Ovary (tissue), 10 donors: ENCODE measurements at regions of chr15 and their contacts with region 1.

Region 1: GRCh38 chr15:52221730-52222129 is 30.5 kb upstream of the GNB5 start:
- DNase-seq: no peak
- H3K4me3 ChIP-seq: no peak overlapping the region
- H3K27ac ChIP-seq: no peak overlapping the region
- H3K4me1 ChIP-seq: no peaks in the 10 kb centered on the region
- H3K27me3 ChIP-seq: no peaks in the 10 kb centered on the region
- CTCF ChIP-seq: no peak
- EP300 ChIP-seq: no peak
- POLR2A ChIP-seq: no peak

Region 2: DNA sequence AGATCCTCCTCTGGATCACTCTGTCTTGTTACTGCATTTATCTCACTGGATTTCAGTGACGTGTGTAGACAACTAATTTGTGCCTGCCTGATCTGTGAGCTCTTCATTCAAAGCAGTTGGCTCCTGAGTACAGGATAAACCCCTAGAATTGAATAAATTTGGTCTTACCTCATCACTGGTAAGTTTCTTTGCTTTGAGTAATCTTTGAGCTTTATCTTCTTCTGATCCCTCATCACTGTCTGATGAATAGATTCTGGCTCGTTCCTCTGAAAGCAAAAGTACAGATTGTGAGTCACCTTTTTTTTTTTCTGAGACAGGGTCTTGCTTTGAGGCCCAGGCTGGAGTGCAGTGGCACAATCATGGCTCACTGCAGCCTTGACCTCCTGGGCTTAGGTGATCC is 274.6 kb before region 1 on chr15:
- intact Hi-C with region 1: no loop called
- DNase-seq: no peak
- H3K4me3 ChIP-seq: no peak overlapping the region
- H3K27ac ChIP-seq: no peak overlapping the region
- H3K4me1 ChIP-seq: no peaks in the 10 kb centered on the region
- H3K27me3 ChIP-seq: no peaks in the 10 kb centered on the region
- CTCF ChIP-seq: no peak
- EP300 ChIP-seq: no peak
- POLR2A ChIP-seq: no peak

Region 3: DNA sequence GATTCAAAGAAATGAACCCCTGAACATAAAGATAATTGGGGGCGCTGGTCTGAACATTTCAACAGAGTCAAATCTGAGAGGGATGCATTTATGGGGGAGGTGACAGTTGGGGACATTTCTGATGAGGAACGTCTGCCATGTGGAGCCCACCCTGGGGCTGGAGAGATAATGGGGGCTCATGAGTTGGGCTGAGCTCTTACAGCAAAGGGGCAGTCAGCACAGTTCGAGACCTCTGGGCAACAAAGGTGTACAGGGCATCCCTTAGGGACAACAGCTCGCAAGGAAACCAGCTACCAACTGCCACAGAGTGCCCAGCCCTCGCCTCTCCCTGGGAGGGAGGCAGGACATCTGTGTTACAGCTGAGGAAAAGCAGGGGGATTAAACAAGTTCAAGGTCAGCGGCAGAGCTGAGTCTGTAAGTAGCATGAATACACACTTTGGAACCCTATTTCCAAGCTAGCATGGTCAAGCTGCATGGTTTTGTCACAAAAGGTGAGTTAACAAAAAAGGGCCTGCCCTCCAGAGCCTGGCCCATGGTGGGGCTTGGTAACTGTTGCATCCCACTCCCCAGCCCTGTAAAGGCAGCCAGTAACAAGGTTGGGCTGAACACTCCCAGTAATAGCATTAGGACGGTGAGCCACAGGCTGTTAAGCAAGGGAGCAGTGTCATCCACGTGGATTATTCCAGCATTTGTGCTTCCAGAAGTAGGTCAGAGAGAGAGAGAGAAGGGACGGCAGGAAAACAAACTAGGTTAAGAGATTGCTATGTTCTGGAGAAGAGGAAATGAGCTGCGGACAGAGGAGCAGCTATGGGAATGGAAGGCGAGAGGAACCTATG is 34.9 kb before region 1 on chr15:
- intact Hi-C with region 1: loop called in 1 of 4 experiments (anchors 5 kb)
- DNase-seq: peak; percentile 43 to 70 (median 49)
- H3K4me3 ChIP-seq: no peak overlapping the region
- H3K27ac ChIP-seq: peak overlapping the region; percentile 59 to 84
- H3K4me1 ChIP-seq: peaks cover 15% of the 10 kb centered on the region
- H3K27me3 ChIP-seq: no peaks in the 10 kb centered on the region
- CTCF ChIP-seq: no peak
- EP300 ChIP-seq: no peak
- POLR2A ChIP-seq: no peak